ENCODE measurements at regions of chr1 and their contacts with region 1.

Region 1: DNA sequence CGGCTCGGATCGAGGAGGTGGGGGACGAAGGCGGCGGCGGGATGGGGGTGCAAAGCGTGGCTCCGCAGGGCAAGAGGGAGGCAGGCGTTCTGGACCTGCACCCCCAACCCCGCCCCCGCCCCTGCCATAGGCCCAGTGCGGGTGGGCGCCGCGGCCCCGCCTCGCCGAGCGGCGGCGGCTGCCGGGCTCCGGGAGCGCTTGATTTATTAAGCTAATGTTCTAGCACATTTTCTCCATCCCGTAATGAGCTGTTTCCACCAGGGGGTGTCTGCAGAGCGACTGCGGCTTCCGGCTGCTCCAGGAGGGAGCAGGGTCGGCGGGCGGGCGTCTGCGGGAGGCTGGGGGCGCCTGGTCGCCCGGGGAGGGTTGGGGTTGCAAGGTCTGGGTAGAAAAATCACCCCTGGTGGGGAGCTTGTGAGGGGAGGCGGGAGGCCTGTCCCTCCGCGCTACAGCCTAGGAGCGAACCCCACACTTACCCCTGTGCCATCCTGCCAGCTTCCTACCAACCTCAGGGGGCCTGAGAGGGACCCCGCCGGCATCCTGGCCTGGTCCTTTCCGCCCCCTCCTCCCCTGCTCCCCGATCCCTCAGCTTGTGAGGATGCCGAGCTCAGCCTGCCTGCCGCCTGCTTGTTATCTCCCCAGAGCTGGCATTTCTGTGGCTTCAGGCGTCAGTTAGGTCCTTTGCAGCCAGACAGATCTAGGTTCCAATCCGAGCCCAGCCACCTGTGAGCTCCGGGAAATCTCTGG is 48.5 kb upstream of the ACOT11 start:
- DNase-seq: peak; percentile 82
- H3K4me3 Mint-ChIP-seq: peak overlapping the region; percentile 70
- H3K27ac Mint-ChIP-seq: no peak overlapping the region
- H3K4me1 Mint-ChIP-seq: peaks cover 8% of the 10 kb centered on the region
- H3K27me3 Mint-ChIP-seq: peaks cover 56% of the 10 kb centered on the region

Region 2: GRCh38 chr1:54132495-54132894 is 367.0 kb before region 1 on chr1:
- intact Hi-C with region 1: loop called (anchors 5 kb)
- DNase-seq: no peak
- H3K4me3 Mint-ChIP-seq: no peak overlapping the region
- H3K27ac Mint-ChIP-seq: no peak overlapping the region
- H3K4me1 Mint-ChIP-seq: no peaks in the 10 kb centered on the region
- H3K27me3 Mint-ChIP-seq: peaks cover 11% of the 10 kb centered on the region

Region 3: GRCh38 chr1:54421101-54421504 is 78.4 kb before region 1 on chr1:
- intact Hi-C with region 1: no loop called
- DNase-seq: no peak
- H3K4me3 Mint-ChIP-seq: no peak overlapping the region
- H3K27ac Mint-ChIP-seq: no peak overlapping the region
- H3K4me1 Mint-ChIP-seq: peaks cover 8% of the 10 kb centered on the region
- H3K27me3 Mint-ChIP-seq: peaks cover 12% of the 10 kb centered on the region

Region 4: DNA sequence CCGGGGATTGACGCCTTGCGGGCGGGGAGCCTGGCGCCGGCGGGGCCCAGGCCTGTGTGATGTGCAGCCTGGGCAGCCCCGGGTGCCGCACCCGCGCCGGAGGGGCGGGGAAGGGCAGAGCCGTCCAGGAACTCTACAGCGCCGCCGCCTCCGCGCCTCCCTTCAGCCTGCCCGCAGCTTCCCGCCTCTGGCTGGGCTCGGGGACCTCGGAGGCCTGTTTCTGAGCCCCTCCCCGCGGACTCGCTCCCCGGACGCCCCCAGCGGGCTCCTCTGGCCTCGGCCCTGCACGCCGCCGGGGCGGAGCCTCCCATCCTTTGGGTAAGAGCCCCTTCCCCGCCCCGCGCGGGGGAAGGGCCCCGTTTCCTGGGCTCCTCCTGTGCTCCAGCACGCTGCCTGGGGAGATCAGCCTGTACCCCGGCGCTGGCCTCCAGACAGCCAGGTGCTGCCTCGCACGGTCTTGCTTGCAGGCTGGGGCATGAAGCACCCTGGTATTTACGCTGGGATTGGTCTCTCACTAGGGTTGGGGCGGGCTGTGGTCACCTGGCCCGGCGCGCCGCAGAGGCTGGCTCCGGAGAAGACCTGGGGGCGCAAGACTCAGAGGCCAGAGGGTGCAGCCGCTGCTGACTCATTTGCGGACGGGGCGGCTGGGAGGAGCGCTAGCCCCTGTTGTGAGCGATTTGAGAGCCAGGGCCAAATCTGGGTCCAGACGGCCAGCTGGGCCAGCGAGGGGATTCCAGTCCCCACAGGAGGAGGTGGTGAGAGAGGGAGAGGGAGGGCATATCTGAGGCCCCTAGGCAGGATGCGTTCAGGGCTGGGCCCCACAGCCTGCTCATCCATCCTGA is 42.8 kb after region 1 on chr1:
- intact Hi-C with region 1: loop called (anchors 5 kb)
- DNase-seq: peak; percentile 89
- H3K4me3 Mint-ChIP-seq: peak overlapping the region; percentile 80
- H3K27ac Mint-ChIP-seq: peak overlapping the region; percentile 18
- H3K4me1 Mint-ChIP-seq: peaks cover 13% of the 10 kb centered on the region
- H3K27me3 Mint-ChIP-seq: peaks cover 11% of the 10 kb centered on the region

Region 5: GRCh38 chr1:54810100-54810942 is 310.8 kb after region 1 on chr1:
- intact Hi-C with region 1: loop called (anchors 2 kb)
- DNase-seq: peak; percentile 92
- H3K4me3 Mint-ChIP-seq: no peak overlapping the region
- H3K27ac Mint-ChIP-seq: no peak overlapping the region
- H3K4me1 Mint-ChIP-seq: peaks cover 19% of the 10 kb centered on the region
- H3K27me3 Mint-ChIP-seq: no peaks in the 10 kb centered on the region